PC-9 (cell line): ENCODE measurements at regions of chr21 and their contacts with region 1.

Region 1: DNA sequence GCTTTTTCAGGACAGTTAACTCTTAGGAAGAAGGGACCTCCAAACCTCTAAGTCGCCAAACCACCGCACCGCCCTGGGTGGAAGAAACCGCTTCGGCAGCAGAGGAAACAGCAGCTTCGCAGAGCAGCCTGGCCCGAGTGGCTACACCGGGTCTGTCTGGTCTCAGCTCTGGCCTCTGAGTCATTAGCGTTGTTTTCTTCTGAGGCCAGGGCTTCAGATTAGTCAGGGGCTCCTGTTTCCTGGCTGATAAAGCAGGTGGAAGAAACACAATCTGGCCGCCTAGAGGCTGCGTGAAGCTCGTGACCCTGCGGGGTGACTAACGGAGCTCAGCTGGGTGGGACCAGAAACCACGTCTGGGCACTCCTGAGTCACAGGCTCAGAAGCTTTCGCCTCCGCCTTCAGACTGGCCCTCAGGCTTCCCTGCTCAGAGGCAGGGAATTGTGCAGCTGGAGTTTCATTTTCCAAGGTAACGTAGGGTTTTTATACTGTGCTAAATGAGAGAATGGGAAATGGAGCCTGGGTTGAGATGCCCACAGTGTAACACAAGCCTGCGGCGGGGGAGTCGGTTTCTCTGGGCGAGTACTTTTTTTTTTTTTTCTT is 44.9 kb downstream of the CHAF1B start:
- DNase-seq: peak; percentile 90 to 97
- H3K4me3 ChIP-seq: peak overlapping the region; percentile 57
- H3K27ac ChIP-seq: peak overlapping the region; percentile 96
- H3K4me1 ChIP-seq: peaks cover 26% of the 10 kb centered on the region
- H3K27me3 ChIP-seq: no peaks in the 10 kb centered on the region
- CTCF ChIP-seq: no peak

Region 2: DNA sequence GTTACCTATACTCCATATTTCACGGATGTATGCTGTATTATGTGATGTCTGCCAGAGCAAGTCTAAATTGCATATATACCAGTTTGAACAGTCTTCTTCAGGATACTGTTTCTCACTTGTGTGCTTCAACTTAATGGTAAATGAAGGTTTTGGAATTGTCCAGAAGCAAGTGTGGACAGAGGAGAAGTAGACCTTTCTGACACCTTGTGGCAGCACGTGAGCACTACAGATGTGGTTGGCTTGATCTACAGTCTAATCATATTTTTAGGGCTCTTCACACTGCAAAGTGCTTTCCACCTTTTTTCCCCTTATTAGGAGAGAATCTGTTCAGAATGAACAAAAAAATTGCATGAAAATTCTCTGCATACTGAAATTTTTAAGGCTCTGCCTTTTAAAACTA is 99.1 kb before region 1 on chr21:
- CTCF ChIA-PET with region 1: no interaction called
- POLR2A ChIA-PET with region 1: no interaction called
- intact Hi-C with region 1: no loop called
- DNase-seq: peak; percentile 32 to 40
- H3K4me3 ChIP-seq: no peak overlapping the region
- H3K27ac ChIP-seq: no peak overlapping the region
- H3K4me1 ChIP-seq: no peaks in the 10 kb centered on the region
- H3K27me3 ChIP-seq: no peaks in the 10 kb centered on the region
- CTCF ChIP-seq: peak; percentile 72

Region 3: DNA sequence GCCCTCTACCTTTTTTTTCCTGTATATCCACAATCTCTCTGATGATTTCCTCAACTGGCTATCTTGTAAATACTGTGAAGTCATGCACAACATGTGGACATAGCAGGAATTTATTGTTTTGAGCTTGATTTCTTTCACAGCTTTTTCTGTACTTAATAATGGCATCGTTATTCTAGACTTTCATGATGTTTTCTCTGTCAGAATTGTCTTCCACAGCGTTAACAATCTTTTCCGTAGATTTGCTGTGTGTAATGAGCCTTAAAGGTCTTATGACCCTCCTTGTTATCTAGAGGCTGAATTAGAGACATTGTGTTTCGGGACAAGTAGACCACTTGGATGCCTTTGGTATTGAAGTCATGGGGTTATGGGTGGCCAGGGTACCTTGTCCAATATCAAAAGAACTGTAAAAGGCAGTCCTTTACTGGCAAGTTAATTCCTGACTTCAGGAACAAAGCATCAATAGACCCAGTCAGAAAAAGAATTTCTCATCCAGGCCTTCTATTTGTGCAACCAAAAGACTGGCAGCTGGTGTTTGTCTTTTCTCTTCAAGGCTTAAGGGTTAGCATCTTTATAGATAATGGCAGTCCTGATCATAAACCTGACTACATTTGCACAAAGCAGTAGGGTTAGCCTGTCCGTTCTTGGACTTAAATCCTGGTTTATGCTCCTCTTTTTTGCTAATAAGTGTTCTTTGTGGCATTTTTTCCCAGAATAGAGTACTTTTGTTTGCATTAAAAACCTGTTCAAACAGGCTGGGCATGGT is 74.9 kb before region 1 on chr21:
- CTCF ChIA-PET with region 1: no interaction called
- POLR2A ChIA-PET with region 1: no interaction called
- intact Hi-C with region 1: no loop called
- DNase-seq: no peak
- H3K4me3 ChIP-seq: no peak overlapping the region
- H3K27ac ChIP-seq: no peak overlapping the region
- H3K4me1 ChIP-seq: no peaks in the 10 kb centered on the region
- H3K27me3 ChIP-seq: no peaks in the 10 kb centered on the region
- CTCF ChIP-seq: no peak

Region 4: GRCh38 chr21:36478207-36478701 is 48.2 kb after region 1 on chr21:
- CTCF ChIA-PET with region 1: no interaction called
- POLR2A ChIA-PET with region 1: interaction called, 6 read pairs
- intact Hi-C with region 1: loop called (anchors 1 kb)
- DNase-seq: peak; percentile 27 to 74
- H3K4me3 ChIP-seq: no peak overlapping the region
- H3K27ac ChIP-seq: no peak overlapping the region
- H3K4me1 ChIP-seq: peaks cover 12% of the 10 kb centered on the region
- H3K27me3 ChIP-seq: no peaks in the 10 kb centered on the region
- CTCF ChIP-seq: no peak

Region 5: GRCh38 chr21:36603221-36603620 is 173.2 kb after region 1 on chr21:
- CTCF ChIA-PET with region 1: no interaction called
- POLR2A ChIA-PET with region 1: no interaction called
- intact Hi-C with region 1: no loop called
- DNase-seq: no peak
- H3K4me3 ChIP-seq: no peak overlapping the region
- H3K27ac ChIP-seq: no peak overlapping the region
- H3K4me1 ChIP-seq: no peaks in the 10 kb centered on the region
- H3K27me3 ChIP-seq: no peaks in the 10 kb centered on the region
- CTCF ChIP-seq: no peak